ENCODE measurements at regions of chr13 and their contacts with region 1.

Region 1: DNA sequence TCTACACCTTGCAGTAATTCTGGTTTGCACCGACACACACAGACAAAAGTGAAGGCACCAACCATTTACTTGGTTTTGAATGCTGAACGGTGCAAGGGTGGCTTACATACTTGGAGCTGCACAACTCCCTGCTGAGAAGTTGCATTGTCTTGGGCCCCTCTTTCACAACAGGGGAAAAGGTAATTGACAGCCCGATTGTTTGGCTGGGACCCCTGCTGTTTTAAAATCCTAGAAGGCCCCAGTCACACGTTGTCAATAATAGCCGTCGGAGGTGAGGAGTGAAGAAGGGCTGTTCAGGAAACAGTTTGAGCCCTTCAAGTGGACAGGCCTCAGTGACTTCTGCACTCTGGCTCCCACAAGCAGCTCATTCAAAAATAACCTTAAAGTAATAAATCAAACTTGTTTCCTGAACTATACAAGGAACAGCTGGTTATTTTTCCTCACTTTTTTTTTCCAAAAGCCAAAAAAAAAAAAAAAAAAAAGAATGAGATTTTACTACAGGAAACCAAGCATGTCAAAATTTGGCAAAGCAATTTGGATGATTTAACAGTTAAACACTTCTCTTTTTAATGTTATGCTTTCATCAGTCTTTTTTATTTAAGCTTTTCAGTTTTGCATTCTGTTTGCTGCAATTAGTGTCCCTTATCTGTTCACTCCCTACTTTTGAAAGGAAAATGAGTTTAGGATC is 19.0 kb upstream of the SPRY2 start:
- DNase-seq: no peak
- H3K4me3 Mint-ChIP-seq: no peak overlapping the region
- H3K27ac Mint-ChIP-seq: no peak overlapping the region
- H3K4me1 Mint-ChIP-seq: no peaks in the 10 kb centered on the region
- H3K27me3 Mint-ChIP-seq: peaks cover 4% of the 10 kb centered on the region

Region 2: DNA sequence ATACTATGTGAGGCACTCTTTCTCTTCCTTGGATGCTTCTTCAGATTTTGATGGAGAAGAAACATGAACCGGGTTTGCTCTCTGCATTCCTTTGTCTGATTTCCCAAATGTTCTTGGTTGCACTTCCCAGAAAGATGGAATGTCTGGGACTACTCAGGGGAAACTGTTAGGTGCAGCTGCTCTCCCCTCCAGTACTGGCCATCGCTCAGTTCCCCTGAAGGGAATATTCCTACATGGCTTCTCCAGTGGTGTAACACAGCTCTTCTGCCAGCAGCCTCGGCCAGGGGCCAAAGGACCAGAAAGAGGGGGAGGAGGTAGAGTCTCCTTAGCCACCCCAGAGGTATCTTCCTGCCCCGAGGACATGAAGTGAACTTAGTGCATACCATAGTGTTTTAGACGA is 14.5 kb after region 1 on chr13:
- CTCF ChIA-PET with region 1: interaction called, 10 read pairs
- DNase-seq: no peak
- H3K4me3 Mint-ChIP-seq: no peak overlapping the region
- H3K27ac Mint-ChIP-seq: no peak overlapping the region
- H3K4me1 Mint-ChIP-seq: no peaks in the 10 kb centered on the region
- H3K27me3 Mint-ChIP-seq: no peaks in the 10 kb centered on the region